Activated T-helper 1 cell treated with anti-CD3 and anti-CD28 coated beads, Interleukin-12 subunit alpha, Interleukin-12 subunit beta, Interleukin-2, Interleukin-4 antibody, amounts not matched to agents 30 ng/mL and 10 ng/mL and 1 ng/mL, durations not matched to agents 14 hours and 24 hours and 36 hours (primary cell): ENCODE measurements at regions of chr16 and their contacts with region 1.

Region 1: DNA sequence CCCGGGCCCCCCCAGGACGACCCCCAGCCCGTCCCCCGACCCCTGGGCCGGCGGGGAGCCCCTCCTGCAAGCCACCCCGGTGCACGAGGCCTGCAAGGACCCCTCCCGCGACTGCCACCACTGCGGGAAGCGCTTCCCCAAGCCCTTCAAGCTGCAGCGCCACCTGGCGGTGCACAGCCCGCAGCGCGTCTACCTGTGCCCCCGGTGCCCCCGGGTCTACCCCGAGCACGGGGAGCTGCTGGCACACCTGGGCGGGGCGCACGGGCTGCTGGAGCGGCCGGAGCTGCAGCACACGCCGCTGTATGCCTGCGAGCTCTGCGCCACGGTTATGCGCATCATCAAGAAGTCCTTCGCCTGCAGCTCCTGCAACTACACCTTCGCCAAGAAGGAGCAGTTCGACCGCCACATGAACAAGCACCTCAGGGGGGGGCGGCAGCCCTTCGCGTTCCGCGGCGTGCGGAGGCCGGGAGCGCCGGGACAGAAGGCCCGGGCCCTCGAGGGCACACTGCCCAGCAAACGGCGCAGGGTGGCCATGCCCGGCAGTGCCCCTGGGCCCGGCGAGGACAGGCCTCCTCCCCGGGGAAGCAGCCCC is 15.6 kb upstream of the ZFPM1 start:
- DNase-seq: peak; percentile 52
- H3K4me3 Mint-ChIP-seq: no peak overlapping the region
- H3K27ac Mint-ChIP-seq: no peak overlapping the region
- H3K4me1 Mint-ChIP-seq: no peaks in the 10 kb centered on the region
- H3K27me3 Mint-ChIP-seq: no peaks in the 10 kb centered on the region

Region 2: DNA sequence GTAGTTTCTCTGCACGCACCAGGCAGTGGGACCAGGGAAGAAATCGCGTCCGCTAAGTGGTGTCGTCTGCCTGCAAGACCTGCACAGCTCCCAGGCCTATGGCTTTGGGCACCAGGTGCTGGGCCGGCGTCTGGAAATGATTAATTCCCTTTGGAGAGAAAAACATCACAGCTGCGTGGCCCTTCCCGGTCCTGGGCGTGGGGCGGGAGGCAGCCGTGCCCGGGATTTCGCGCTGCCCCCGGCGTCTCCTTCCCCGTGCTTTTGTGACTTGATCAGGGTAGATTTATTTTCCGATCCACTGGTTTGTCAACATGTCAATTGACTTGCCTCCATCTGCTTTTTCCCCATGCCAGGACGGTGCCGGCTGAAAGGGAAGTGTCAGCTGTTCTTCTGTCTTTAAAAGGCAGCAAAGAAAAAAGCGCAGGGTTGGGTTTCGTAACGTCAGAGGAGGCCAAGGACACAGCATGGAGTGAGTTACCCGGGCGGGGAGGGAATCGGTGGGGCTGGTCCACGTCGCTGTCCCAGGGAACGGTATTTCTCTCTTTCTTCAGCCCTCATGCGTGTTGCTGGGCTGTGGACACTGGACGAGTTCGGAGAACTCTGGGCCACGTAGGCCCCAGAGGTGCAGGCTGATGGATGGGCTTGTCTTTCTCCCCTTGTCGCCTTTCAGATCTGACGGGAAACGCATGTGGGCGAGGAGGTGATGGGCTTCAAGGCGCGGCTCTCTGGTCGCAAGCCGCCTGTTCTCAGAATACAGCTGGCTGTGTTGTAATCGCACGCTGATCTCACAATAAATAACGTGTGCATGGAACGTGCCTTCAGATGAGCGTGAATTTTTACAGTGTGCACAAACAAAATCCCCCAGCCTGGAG is 242.8 kb before region 1 on chr16:
- intact Hi-C with region 1: loop called (anchors 10 kb)
- DNase-seq: no peak
- H3K4me3 Mint-ChIP-seq: no peak overlapping the region
- H3K27ac Mint-ChIP-seq: no peak overlapping the region
- H3K4me1 Mint-ChIP-seq: no peaks in the 10 kb centered on the region
- H3K27me3 Mint-ChIP-seq: no peaks in the 10 kb centered on the region